ENCODE measurements at regions of chr2 and their contacts with region 1.

Region 1: GRCh38 chr2:202588647-202589581 is 45.9 kb upstream of the FAM117B start:
- DNase-seq: peak; percentile 83
- ATAC-seq: peak; percentile 99
- H3K4me3 Mint-ChIP-seq: peak overlapping the region; percentile 26
- H3K27ac Mint-ChIP-seq: peak overlapping the region; percentile 75
- H3K4me1 Mint-ChIP-seq: peaks cover 12% of the 10 kb centered on the region
- H3K27me3 Mint-ChIP-seq: no peaks in the 10 kb centered on the region
- CTCF ChIP-seq: peak; percentile 81

Region 2: GRCh38 chr2:202602285-202602684 is 13.4 kb after region 1 on chr2:
- CTCF ChIA-PET with region 1: interaction called, 56 read pairs
- POLR2A ChIA-PET with region 1: interaction called, 4 read pairs
- intact Hi-C with region 1: no loop called
- DNase-seq: no peak
- ATAC-seq: no peak
- H3K4me3 Mint-ChIP-seq: no peak overlapping the region
- H3K27ac Mint-ChIP-seq: no peak overlapping the region
- H3K4me1 Mint-ChIP-seq: peaks cover 15% of the 10 kb centered on the region
- H3K27me3 Mint-ChIP-seq: no peaks in the 10 kb centered on the region
- CTCF ChIP-seq: no peak

Region 3: GRCh38 chr2:202628646-202629198 is 39.8 kb after region 1 on chr2:
- CTCF ChIA-PET with region 1: interaction called, 17 read pairs
- POLR2A ChIA-PET with region 1: interaction called, 6 read pairs
- intact Hi-C with region 1: loop called (anchors 5 kb)
- DNase-seq: no peak
- ATAC-seq: no peak
- H3K4me3 Mint-ChIP-seq: no peak overlapping the region
- H3K27ac Mint-ChIP-seq: no peak overlapping the region
- H3K4me1 Mint-ChIP-seq: peaks cover 10% of the 10 kb centered on the region
- H3K27me3 Mint-ChIP-seq: no peaks in the 10 kb centered on the region
- CTCF ChIP-seq: no peak

Region 4: GRCh38 chr2:202634556-202635427 is 45.9 kb after region 1 on chr2 and contains the start of gene FAM117B:
- CTCF ChIA-PET with region 1: interaction called, 17 read pairs
- POLR2A ChIA-PET with region 1: interaction called, 6 read pairs
- intact Hi-C with region 1: loop called (anchors 5 kb)
- DNase-seq: peak; percentile 100
- ATAC-seq: peak; percentile 90
- H3K4me3 Mint-ChIP-seq: peak within 1 kb of the TSS; percentile 93
- H3K27ac Mint-ChIP-seq: peak within 1 kb of the TSS; percentile 97
- H3K4me1 Mint-ChIP-seq: peaks cover 42% of the 10 kb centered on the region
- H3K27me3 Mint-ChIP-seq: no peaks in the 10 kb centered on the region
- CTCF ChIP-seq: no peak
- total RNA-seq, gene FAM117B: 17.2 to 19.4 TPM

Region 5: GRCh38 chr2:202718614-202719013 is 129.7 kb after region 1 on chr2:
- CTCF ChIA-PET with region 1: interaction called, 17 read pairs
- POLR2A ChIA-PET with region 1: no interaction called
- intact Hi-C with region 1: no loop called
- DNase-seq: no peak
- ATAC-seq: no peak
- H3K4me3 Mint-ChIP-seq: no peak overlapping the region
- H3K27ac Mint-ChIP-seq: no peak overlapping the region
- H3K4me1 Mint-ChIP-seq: peaks cover 49% of the 10 kb centered on the region
- H3K27me3 Mint-ChIP-seq: no peaks in the 10 kb centered on the region
- CTCF ChIP-seq: no peak

Region 6: GRCh38 chr2:202870431-202871299 is 281.8 kb after region 1 on chr2:
- CTCF ChIA-PET with region 1: interaction called, 28 read pairs
- POLR2A ChIA-PET with region 1: interaction called, 5 read pairs
- intact Hi-C with region 1: loop called (anchors 5 kb)
- DNase-seq: peak; percentile 80
- ATAC-seq: peak; percentile 83
- H3K4me3 Mint-ChIP-seq: peak overlapping the region; percentile 82
- H3K27ac Mint-ChIP-seq: peak overlapping the region; percentile 75
- H3K4me1 Mint-ChIP-seq: peaks cover 9% of the 10 kb centered on the region
- H3K27me3 Mint-ChIP-seq: no peaks in the 10 kb centered on the region
- CTCF ChIP-seq: peak; percentile 77

Measured in activated CD8-positive, alpha-beta T cell treated with anti-CD3 and anti-CD28 coated beads for 36 hours (primary cell).